Caco-2 (cell line): ENCODE measurements at regions of chr9 and their contacts with region 1.

Region 1: DNA sequence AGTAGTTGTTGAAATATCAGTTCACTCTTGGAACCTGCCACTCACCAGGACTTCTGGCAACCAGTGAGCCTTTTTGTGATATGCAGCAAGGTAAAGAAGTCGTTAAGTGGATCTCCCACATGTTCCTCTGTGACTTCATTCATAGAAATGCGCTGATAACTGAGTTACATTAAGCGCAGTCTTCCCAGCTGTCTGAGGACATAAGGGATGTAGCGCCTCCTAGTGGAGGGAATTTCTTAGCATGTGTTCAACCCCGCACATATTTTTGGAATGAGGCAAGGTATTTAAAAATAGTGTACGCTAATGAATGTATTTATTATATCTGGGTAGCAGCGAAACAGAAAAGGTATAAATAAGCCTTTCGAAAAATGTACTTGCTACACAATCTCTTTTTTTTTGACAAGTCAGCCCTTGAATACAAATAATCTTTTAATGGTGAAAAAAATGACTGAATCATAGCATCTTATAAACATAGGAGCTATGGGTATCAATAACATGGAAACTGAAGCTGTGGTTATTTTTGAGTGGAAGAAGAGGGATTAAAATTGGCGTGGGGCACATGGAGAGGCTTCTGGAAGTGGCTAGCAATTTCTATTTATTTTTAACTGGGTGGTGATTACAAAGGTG is 38.0 kb downstream of the PALM2AKAP2 start:
- DNase-seq: peak; percentile 70 to 78
- H3K4me3 ChIP-seq: no peak overlapping the region
- H3K4me3 Mint-ChIP-seq: no peak overlapping the region
- H3K27ac Mint-ChIP-seq: no peak overlapping the region
- H3K4me1 ChIP-seq: no peaks in the 10 kb centered on the region
- H3K4me1 Mint-ChIP-seq: no peaks in the 10 kb centered on the region
- H3K27me3 ChIP-seq: no peaks in the 10 kb centered on the region
- H3K27me3 Mint-ChIP-seq: peaks cover 3% of the 10 kb centered on the region
- CTCF ChIP-seq: peak; percentile 83 to 84

Region 2: DNA sequence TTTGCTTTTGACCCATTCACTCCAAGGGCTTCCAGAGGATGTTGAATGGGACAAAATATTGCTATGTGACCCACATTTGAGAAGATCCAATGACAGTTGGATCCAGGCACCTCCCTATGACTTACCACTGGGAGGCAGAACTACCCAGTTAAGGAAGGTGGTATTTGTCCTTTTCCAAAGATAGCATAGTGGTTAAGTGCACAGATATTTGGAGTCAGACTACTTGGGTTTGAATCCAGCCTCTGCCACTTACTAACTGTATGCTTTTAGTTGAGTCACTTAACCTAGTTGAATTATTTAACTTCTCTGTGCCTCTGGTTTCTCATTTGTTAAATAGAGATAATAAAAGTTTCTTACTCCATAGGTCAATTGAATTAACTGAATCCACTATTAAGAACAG is 112.4 kb before region 1 on chr9:
- CTCF ChIA-PET with region 1: no interaction called
- POLR2A ChIA-PET with region 1: no interaction called
- intact Hi-C with region 1: loop called (anchors 1 kb)
- DNase-seq: peak in 1 of 2 experiments; percentile 6
- H3K4me3 ChIP-seq: no peak overlapping the region
- H3K4me3 Mint-ChIP-seq: no peak overlapping the region
- H3K27ac Mint-ChIP-seq: no peak overlapping the region
- H3K4me1 ChIP-seq: no peaks in the 10 kb centered on the region
- H3K4me1 Mint-ChIP-seq: no peaks in the 10 kb centered on the region
- H3K27me3 ChIP-seq: no peaks in the 10 kb centered on the region
- H3K27me3 Mint-ChIP-seq: peaks cover 10% of the 10 kb centered on the region
- CTCF ChIP-seq: peak in 1 of 2 experiments; percentile 8

Region 3: GRCh38 chr9:109856785-109857184 is 38.8 kb after region 1 on chr9:
- CTCF ChIA-PET with region 1: no interaction called
- POLR2A ChIA-PET with region 1: no interaction called
- intact Hi-C with region 1: no loop called
- DNase-seq: no peak
- H3K4me3 ChIP-seq: no peak overlapping the region
- H3K4me3 Mint-ChIP-seq: no peak overlapping the region
- H3K27ac Mint-ChIP-seq: no peak overlapping the region
- H3K4me1 ChIP-seq: no peaks in the 10 kb centered on the region
- H3K4me1 Mint-ChIP-seq: no peaks in the 10 kb centered on the region
- H3K27me3 ChIP-seq: no peaks in the 10 kb centered on the region
- H3K27me3 Mint-ChIP-seq: peaks cover 16% of the 10 kb centered on the region
- CTCF ChIP-seq: no peak